Adrenal gland (tissue), 19 donors: ENCODE measurements at regions of chr1 and their contacts with region 1.

Region 1: DNA sequence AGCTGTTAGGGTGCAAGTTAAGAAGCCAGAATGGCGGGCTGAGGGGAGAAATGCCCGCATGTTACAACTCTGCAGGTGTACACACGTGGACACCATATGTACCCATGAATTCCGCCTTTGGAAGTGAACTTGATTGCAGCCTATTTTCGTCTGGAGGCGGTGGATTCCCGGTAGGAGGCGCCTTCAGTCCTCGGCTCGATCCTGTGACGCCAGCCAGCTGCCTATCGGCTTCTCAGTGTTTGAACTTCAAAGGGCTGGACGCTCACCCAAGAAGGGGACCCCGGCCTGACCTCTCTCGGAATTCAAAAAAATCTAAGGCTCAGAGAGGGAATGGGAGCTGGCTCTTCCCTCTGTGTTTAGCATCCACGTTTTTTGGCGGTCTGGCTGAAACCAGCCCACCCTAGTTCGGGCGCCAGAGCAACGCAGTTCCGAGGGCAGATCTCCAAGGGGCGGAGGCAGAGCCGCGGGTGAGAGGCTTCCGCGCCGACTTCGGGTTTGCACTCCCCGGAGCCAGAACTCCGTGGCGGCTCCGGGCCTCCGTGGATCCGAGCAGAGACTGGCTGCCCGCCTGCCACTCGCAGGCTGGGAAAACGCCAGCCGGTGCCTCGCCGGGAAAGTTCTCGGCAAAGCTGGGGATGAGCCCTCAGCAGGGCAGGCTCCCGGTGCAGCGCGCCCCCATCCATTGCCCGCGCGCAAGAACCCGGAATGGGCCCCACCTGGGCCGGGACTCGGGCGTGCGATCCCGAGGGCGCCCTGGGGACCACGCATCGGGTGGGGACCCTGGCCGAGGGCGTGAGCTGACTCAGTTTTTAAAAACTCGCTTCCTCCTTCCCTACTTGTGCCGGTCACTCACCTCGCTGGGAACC is 996 bp upstream of the TMEM51 start:
- DNase-seq: peak; percentile 89 to 96 (median 93)
- H3K4me3 ChIP-seq: peak overlapping the region in 3 of 4 donors; percentile 49 to 86 (median 72)
- H3K27ac ChIP-seq: peak overlapping the region; percentile 85 to 99 (median 91)
- H3K4me1 ChIP-seq: peaks cover 11 to 63% of the 10 kb centered on the region in 2 donors
- H3K27me3 ChIP-seq: no peaks in the 10 kb centered on the region
- CTCF ChIP-seq: peak; percentile 31 to 77 (median 64)
- POLR2A ChIP-seq: peak; percentile 50 to 89

Region 2: DNA sequence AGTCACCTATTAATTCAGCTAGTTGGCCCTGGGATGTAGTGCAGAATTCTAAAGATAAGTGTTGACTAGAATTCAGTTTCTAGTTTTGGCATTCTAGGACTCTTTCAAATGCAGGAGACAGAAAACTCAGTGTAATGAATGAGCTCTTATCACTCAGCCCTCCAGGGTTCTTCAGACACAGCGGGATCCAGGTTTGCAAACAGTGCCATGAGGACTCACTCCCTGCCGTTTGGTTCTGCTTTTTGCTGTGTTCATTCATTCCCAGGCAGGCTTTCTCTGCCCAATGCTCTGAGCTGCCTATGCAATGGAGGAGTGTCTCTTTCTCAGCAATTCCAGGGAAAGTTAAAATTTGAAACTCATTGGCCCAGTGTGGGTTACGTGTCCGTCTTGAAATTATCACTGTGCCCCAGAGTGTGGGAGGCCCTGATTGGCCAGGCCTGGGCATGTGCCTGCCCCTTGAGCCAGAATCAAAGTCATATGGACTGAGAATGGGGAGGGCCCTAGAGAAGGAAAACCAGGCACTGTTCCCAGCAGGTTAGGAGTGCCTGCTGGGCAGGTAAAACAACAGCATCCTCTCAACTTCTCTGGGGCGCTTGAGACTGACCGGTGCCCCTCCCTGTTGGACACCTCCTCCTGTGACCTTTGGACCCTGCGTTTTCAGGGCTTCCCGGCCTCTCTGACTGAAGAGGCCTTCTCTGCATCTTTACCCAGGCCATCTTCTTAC is 44.4 kb after region 1 on chr1:
- intact Hi-C with region 1: loop called (anchors 5 to 10 kb)
- DNase-seq: peak in 1 of 7 donors; percentile 7
- H3K4me3 ChIP-seq: no peak overlapping the region
- H3K27ac ChIP-seq: no peak overlapping the region
- H3K4me1 ChIP-seq: peaks cover 10 to 34% of the 10 kb centered on the region in 2 donors
- H3K27me3 ChIP-seq: no peaks in the 10 kb centered on the region
- CTCF ChIP-seq: no peak
- POLR2A ChIP-seq: no peak

Region 3: GRCh38 chr1:15206418-15207030 is 54.0 kb after region 1 on chr1:
- intact Hi-C with region 1: loop called in 1 of 2 experiments (anchors 10 kb)
- DNase-seq: peak in 3 of 7 donors; percentile 21 to 58 (median 42)
- H3K4me3 ChIP-seq: no peak overlapping the region
- H3K27ac ChIP-seq: peak overlapping the region in 3 of 5 donors; percentile 44 to 64 (median 58)
- H3K4me1 ChIP-seq: peaks cover 29 to 56% of the 10 kb centered on the region in 2 donors
- H3K27me3 ChIP-seq: no peaks in the 10 kb centered on the region
- CTCF ChIP-seq: no peak
- POLR2A ChIP-seq: no peak